HAP-1 (cell line): ENCODE measurements at regions of chr10 and their contacts with region 1.

Region 1: GRCh38 chr10:103685880-103686669 is 169.3 kb downstream of the SH3PXD2A start:
- DNase-seq: peak; percentile 27 to 83
- H3K4me3 ChIP-seq: no peak overlapping the region
- H3K4me1 ChIP-seq: no peaks in the 10 kb centered on the region
- H3K27me3 ChIP-seq: no peaks in the 10 kb centered on the region

Region 2: GRCh38 chr10:103442031-103442461 is 244.0 kb before region 1 on chr10:
- in situ Hi-C with region 1: no loop called
- DNase-seq: no peak
- H3K4me3 ChIP-seq: no peak overlapping the region
- H3K4me1 ChIP-seq: no peaks in the 10 kb centered on the region
- H3K27me3 ChIP-seq: no peaks in the 10 kb centered on the region

Region 3: GRCh38 chr10:103605359-103606095 is 80.5 kb before region 1 on chr10:
- in situ Hi-C with region 1: loop called (anchors 10 kb)
- DNase-seq: peak in 1 of 2 experiments; percentile 50
- H3K4me3 ChIP-seq: no peak overlapping the region
- H3K4me1 ChIP-seq: no peaks in the 10 kb centered on the region
- H3K27me3 ChIP-seq: no peaks in the 10 kb centered on the region

Region 4: DNA sequence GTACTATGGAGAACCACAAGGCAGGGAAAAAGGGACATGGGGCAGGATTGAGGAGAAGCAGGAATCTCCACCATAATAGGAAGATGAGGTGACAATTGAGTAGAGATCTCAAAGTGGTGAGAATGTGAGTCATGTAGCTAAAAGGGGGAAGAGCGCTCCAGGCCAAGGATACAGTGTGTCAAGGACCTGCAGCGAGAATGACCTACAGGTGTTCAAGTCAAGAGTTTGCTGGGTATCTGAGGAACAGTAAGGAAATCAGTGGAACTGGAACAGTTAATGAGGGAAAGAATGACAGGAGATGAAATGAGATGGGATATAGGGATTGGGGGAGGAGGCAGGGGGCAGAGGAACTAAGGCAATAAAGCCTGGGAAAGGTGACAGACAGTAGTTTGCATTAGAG is 469.5 kb after region 1 on chr10:
- in situ Hi-C with region 1: no loop called
- DNase-seq: no peak
- H3K4me3 ChIP-seq: no peak overlapping the region
- H3K4me1 ChIP-seq: no peaks in the 10 kb centered on the region
- H3K27me3 ChIP-seq: peaks cover 23% of the 10 kb centered on the region